MCF 10A (cell line): ENCODE measurements at regions of chr6 and their contacts with region 1.

Region 1: DNA sequence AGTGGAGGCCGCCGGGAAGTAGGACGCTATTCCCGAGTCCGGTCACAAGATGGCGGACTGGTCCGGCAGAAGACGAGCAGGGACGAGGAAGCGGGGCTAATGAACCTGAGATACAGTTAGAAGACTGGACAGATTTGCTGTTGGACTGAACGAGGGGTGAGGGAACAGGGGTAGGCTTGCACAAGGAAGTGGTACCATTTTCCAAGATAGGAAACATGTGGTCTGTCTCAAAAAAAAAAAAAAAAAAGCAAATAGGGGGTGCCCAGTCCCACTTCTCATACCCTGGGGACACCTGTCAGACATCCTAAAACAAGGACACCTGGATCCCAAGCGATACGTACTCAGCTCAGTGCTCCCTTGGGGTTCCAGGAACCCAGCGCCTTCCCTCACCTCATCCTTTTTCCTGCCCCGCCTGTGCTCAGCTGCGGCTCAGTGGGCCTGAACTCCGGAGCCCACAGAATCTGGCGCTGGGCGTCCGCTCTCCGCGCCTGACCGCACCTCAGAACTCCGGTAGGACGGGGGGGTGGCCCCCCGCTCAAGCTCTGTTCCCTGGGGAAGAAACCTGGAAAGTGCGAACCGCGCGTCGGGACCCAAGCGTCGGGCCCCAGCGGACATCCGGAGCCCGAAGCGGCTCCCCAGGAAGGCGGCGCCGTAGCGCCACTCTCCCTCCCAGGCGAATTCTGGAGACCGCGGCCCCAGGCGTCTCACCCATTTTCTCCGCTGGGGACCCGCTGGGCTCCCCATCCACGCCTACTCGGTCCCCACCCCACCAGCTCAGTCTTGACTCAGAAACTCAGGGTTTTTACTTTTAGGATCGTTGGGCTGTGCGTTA is at the start of gene LY6G5C:
- DNase-seq: peak; percentile 81
- H3K4me3 Mint-ChIP-seq: peak within 1 kb of the TSS; percentile 73
- H3K27ac Mint-ChIP-seq: peak within 1 kb of the TSS; percentile 87
- H3K4me1 Mint-ChIP-seq: peaks cover 12% of the 10 kb centered on the region
- H3K27me3 Mint-ChIP-seq: peaks cover 18% of the 10 kb centered on the region
- CTCF ChIP-seq: peak; percentile 84
- total RNA-seq, gene LY6G5C: 0.64 and 1.4 TPM in 2 replicates

Region 2: DNA sequence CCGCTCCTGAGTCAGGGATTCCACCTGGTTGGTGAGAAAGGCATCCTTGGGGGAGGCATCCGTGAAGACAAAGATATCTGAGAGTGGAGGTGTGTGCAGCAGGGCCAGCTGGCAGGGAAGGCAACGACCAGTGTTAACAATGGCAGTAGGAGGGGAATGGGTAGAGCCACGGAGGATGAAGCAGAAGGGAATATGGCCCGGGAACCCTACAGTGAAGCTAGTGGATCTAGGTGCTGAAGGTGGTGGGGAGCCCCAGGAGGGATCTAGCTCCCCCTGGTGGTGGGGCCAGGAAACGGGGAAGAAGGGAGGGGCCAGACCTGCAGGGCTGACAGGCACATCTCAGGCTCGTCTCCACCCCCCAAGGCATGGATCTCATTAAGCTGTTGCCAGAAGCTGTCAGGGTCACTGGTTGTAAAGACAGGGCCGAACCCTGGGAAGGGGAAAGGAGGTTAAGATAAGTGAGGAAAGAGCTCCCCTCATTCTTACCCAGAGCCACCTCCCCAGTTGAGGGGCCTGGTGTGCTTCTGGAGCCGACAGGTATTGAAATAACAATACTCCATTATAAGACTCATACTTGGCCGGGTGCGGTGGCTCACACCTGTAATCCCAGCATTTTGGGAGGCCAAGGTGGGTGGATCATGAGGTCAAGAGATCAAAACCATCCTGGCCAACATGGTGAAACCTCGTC is 88.8 kb after region 1 on chr6:
- CTCF ChIA-PET with region 1: interaction called, 8 read pairs
- POLR2A ChIA-PET with region 1: no interaction called
- intact Hi-C with region 1: loop called (anchors 1 kb)
- DNase-seq: peak; percentile 74
- H3K4me3 Mint-ChIP-seq: no peak overlapping the region
- H3K27ac Mint-ChIP-seq: no peak overlapping the region
- H3K4me1 Mint-ChIP-seq: peaks cover 5% of the 10 kb centered on the region
- H3K27me3 Mint-ChIP-seq: no peaks in the 10 kb centered on the region
- CTCF ChIP-seq: peak; percentile 65

Region 3: GRCh38 chr6:31888276-31889258 is 207.5 kb after region 1 on chr6:
- CTCF ChIA-PET with region 1: interaction called, 5 read pairs
- POLR2A ChIA-PET with region 1: no interaction called
- intact Hi-C with region 1: loop called (anchors 5 kb)
- DNase-seq: peak; percentile 34
- H3K4me3 Mint-ChIP-seq: no peak overlapping the region
- H3K27ac Mint-ChIP-seq: no peak overlapping the region
- H3K4me1 Mint-ChIP-seq: no peaks in the 10 kb centered on the region
- H3K27me3 Mint-ChIP-seq: no peaks in the 10 kb centered on the region
- CTCF ChIP-seq: peak; percentile 73